Naive thymus-derived CD4-positive, alpha-beta T cell (primary cell): ENCODE measurements at regions of chr3 and their contacts with region 1.

Region 1: DNA sequence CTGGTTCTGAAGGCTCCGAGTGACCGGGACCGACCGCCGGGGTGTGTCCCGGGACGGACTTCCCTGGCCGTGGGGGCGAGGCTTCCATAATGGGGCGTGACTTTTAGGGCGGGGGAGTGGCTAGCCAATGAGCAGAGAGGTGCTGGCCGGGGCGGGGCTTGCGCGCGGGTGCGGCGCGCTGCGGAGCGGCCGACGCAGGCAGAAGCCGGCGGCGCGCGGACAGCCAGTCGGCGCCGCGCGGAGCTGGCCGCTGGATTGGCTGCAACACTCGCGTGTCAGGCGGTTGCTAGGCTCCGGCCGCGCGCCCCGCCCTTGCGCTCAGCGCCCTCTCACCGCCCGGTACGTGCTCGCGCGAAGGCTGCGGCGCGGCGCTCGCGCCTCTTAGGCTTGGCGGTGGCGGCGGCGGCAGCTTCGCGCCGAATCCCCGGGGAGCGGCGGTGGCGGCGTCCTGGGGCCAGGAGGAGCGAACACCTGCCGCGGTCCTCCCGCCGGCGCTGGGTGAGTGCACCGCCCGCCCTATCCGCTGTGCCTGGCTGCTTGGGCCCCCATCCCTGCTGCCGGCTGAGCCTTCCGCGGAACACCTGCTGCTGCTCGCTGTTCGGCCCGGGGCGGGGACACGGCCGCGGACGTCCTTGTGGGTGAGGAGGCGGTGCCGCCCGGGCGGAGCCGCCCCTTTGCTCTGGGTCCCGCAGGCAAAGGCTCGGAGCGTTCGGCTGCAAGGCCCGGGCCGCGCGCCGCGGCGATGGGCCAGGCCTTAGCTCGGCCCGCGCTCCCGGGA is at the start of gene DAG1:
- DNase-seq: peak; percentile 90 to 98 (median 95)
- ATAC-seq: peak; percentile 91
- H3K4me3 ChIP-seq: peak within 1 kb of the TSS; percentile 92
- H3K4me3 Mint-ChIP-seq: peak within 1 kb of the TSS; percentile 87 to 97 (median 92)
- H3K27ac ChIP-seq: peak within 1 kb of the TSS; percentile 94
- H3K27ac Mint-ChIP-seq: peak within 1 kb of the TSS; percentile 89 to 95 (median 93)
- H3K4me1 ChIP-seq: peaks cover 15 to 20% of the 10 kb centered on the region in 2 donors
- H3K4me1 Mint-ChIP-seq: peaks cover 14 to 27% (median 22%) of the 10 kb centered on the region in 7 donors
- H3K27me3 ChIP-seq: no peaks in the 10 kb centered on the region
- H3K27me3 Mint-ChIP-seq: no peaks in the 10 kb centered on the region
- total RNA-seq, gene DAG1: 12.0 to 22.3 (median 20.1) TPM

Region 2: GRCh38 chr3:48685602-48686511 is 784.3 kb before region 1 on chr3 and contains the start of gene NCKIPSD:
- CTCF ChIA-PET with region 1: no interaction called
- POLR2A ChIA-PET with region 1: no interaction called
- intact Hi-C with region 1: loop called in 1 of 2 experiments (anchors 10 kb)
- DNase-seq: peak; percentile 83 to 96 (median 92)
- ATAC-seq: peak; percentile 97
- H3K4me3 ChIP-seq: peak within 1 kb of the TSS; percentile 92
- H3K4me3 Mint-ChIP-seq: peak within 1 kb of the TSS; percentile 88 to 95 (median 93)
- H3K27ac ChIP-seq: peak within 1 kb of the TSS; percentile 79
- H3K27ac Mint-ChIP-seq: peak within 1 kb of the TSS; percentile 73 to 94 (median 89)
- H3K4me1 ChIP-seq: peaks cover 8 to 18% of the 10 kb centered on the region in 2 donors
- H3K4me1 Mint-ChIP-seq: peaks cover 29 to 38% (median 33%) of the 10 kb centered on the region in 7 donors
- H3K27me3 ChIP-seq: no peaks in the 10 kb centered on the region
- H3K27me3 Mint-ChIP-seq: no peaks in the 10 kb centered on the region
- total RNA-seq, gene NCKIPSD: 13.7 to 42.1 (median 20.3) TPM

Region 3: DNA sequence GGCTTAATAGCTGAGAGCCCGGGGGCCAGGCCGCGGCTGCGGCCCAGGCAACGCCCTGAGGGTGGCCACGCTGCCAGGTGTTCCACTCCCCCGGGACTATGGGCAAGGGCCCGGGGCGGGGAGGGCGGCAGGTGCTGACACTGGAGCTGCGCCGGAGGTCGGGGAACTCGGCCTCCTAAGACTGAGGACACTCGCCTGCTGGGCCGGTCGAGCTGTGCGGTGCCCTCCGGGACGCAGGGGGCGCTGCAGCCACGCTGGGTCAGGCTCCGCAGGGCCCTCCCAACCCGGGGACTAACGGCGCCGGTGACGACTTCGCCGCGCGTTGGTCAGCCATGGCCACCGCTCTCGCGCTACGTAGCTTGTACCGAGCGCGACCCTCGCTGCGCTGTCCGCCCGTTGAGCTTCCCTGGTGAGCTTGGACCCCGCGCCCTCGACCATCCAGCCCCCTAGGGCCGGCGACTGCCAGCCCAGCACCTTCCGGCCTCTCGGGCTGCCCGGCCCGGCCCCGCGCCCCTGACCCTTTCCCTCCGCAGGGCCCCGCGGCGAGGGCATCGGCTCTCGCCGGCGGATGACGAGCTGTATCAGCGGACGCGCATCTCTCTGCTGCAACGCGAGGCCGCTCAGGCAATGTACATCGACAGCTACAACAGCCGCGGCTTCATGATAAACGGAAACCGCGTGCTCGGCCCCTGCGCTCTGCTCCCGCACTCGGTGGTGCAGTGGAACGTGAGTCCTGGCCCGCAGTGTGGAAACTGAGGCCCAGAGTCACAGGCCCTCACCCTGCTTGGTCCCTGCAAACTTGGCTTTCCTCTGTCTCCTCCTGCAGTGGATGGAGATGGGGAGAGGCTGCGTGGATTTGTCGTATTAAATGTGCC is 448.1 kb before region 1 on chr3 and contains the start of gene NDUFAF3:
- CTCF ChIA-PET with region 1: interaction called, 3 read pairs
- POLR2A ChIA-PET with region 1: no interaction called
- intact Hi-C with region 1: loop called (anchors 1 to 2 kb)
- DNase-seq: peak; percentile 84 to 96 (median 89)
- ATAC-seq: peak; percentile 89
- H3K4me3 ChIP-seq: peak within 1 kb of the TSS; percentile 99
- H3K4me3 Mint-ChIP-seq: peak within 1 kb of the TSS; percentile 92 to 99 (median 97)
- H3K27ac ChIP-seq: peak within 1 kb of the TSS; percentile 98
- H3K27ac Mint-ChIP-seq: peak within 1 kb of the TSS; percentile 95 to 99 (median 98)
- H3K4me1 ChIP-seq: peaks cover 24 to 25% of the 10 kb centered on the region in 2 donors
- H3K4me1 Mint-ChIP-seq: peaks cover 21 to 61% (median 47%) of the 10 kb centered on the region in 7 donors
- H3K27me3 ChIP-seq: no peaks in the 10 kb centered on the region
- H3K27me3 Mint-ChIP-seq: peaks cover 0 to 2% (median 0%) of the 10 kb centered on the region in 5 donors
- total RNA-seq, gene NDUFAF3: 63.8 to 110 (median 89.3) TPM

Region 4: DNA sequence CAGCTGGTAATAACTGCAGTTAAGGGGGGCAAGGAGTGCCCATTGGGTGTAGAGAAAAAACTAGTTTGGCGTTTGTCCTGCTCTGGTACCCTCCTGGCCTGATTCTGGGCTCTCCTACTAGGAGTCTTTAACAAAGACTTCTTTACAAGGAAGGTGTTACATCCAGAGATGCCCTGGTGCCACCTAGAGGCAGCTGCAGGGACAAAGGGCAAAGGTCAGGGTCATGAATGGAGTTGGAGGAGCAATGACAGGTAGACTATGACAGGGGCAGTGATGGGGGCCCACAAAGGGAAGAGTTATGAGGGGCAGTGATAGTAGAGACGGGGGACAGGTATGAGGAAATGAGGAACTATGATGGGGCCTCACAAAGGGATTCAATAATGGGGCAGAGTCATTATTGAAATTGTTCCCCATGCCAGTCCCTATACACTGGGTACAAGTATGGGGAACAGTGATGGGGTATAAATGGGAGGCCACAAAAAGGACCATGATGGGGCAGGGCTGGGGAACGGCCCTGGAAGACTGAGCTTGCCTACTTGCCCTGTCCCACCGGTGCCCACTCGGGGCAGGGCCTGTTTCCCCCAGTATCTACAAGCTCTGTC is 311.9 kb before region 1 on chr3:
- CTCF ChIA-PET with region 1: no interaction called
- POLR2A ChIA-PET with region 1: no interaction called
- intact Hi-C with region 1: no loop called
- DNase-seq: peak in 8 of 9 donors; percentile 40 to 68 (median 59)
- ATAC-seq: peak; percentile 89
- H3K4me3 ChIP-seq: no peak overlapping the region
- H3K4me3 Mint-ChIP-seq: no peak overlapping the region
- H3K27ac ChIP-seq: peak overlapping the region; percentile 20
- H3K27ac Mint-ChIP-seq: peak overlapping the region in 6 of 9 donors; percentile 3 to 82 (median 18)
- H3K4me1 ChIP-seq: no peaks in the 10 kb centered on the region
- H3K4me1 Mint-ChIP-seq: peaks cover 0 to 10% (median 5%) of the 10 kb centered on the region in 7 donors
- H3K27me3 ChIP-seq: no peaks in the 10 kb centered on the region
- H3K27me3 Mint-ChIP-seq: no peaks in the 10 kb centered on the region

Region 5: DNA sequence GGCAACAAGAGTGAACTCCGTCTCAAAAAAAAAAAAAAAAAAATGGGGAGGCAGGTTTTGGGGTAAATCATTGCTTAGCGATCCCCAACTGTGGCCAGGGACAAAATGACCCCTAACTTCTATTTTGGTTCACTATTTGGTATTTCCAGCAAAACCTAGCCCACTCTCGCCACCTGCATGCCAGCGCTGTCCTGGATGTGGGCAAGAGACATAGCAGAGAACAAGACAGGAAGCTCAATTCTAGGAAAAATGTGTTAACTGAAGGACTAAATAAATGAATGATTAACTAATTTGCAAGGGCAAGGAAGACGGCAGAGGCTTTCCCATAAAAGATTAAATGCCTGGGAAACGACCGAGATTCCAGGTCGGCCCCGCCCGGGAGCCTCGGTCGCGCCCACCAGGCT is 41.4 kb before region 1 on chr3:
- CTCF ChIA-PET with region 1: no interaction called
- POLR2A ChIA-PET with region 1: no interaction called
- intact Hi-C with region 1: loop called (anchors 1 kb)
- DNase-seq: peak in 1 of 9 donors; percentile 13
- ATAC-seq: no peak
- H3K4me3 ChIP-seq: peak overlapping the region; percentile 84
- H3K4me3 Mint-ChIP-seq: peak overlapping the region; percentile 88 to 98 (median 94)
- H3K27ac ChIP-seq: peak overlapping the region; percentile 83
- H3K27ac Mint-ChIP-seq: peak overlapping the region; percentile 49 to 96 (median 94)
- H3K4me1 ChIP-seq: peaks cover 0 to 5% of the 10 kb centered on the region in 2 donors
- H3K4me1 Mint-ChIP-seq: peaks cover 17 to 37% (median 28%) of the 10 kb centered on the region in 7 donors
- H3K27me3 ChIP-seq: no peaks in the 10 kb centered on the region
- H3K27me3 Mint-ChIP-seq: no peaks in the 10 kb centered on the region

Region 6: GRCh38 chr3:49493901-49494300 is 23.8 kb after region 1 on chr3:
- CTCF ChIA-PET with region 1: no interaction called
- POLR2A ChIA-PET with region 1: no interaction called
- intact Hi-C with region 1: no loop called
- DNase-seq: no peak
- ATAC-seq: no peak
- H3K4me3 ChIP-seq: no peak overlapping the region
- H3K4me3 Mint-ChIP-seq: no peak overlapping the region
- H3K27ac ChIP-seq: no peak overlapping the region
- H3K27ac Mint-ChIP-seq: peak overlapping the region in 2 of 9 donors; percentile 69 to 76
- H3K4me1 ChIP-seq: no peaks in the 10 kb centered on the region
- H3K4me1 Mint-ChIP-seq: peaks cover 6 to 14% (median 11%) of the 10 kb centered on the region in 7 donors
- H3K27me3 ChIP-seq: no peaks in the 10 kb centered on the region
- H3K27me3 Mint-ChIP-seq: no peaks in the 10 kb centered on the region

Region 7: DNA sequence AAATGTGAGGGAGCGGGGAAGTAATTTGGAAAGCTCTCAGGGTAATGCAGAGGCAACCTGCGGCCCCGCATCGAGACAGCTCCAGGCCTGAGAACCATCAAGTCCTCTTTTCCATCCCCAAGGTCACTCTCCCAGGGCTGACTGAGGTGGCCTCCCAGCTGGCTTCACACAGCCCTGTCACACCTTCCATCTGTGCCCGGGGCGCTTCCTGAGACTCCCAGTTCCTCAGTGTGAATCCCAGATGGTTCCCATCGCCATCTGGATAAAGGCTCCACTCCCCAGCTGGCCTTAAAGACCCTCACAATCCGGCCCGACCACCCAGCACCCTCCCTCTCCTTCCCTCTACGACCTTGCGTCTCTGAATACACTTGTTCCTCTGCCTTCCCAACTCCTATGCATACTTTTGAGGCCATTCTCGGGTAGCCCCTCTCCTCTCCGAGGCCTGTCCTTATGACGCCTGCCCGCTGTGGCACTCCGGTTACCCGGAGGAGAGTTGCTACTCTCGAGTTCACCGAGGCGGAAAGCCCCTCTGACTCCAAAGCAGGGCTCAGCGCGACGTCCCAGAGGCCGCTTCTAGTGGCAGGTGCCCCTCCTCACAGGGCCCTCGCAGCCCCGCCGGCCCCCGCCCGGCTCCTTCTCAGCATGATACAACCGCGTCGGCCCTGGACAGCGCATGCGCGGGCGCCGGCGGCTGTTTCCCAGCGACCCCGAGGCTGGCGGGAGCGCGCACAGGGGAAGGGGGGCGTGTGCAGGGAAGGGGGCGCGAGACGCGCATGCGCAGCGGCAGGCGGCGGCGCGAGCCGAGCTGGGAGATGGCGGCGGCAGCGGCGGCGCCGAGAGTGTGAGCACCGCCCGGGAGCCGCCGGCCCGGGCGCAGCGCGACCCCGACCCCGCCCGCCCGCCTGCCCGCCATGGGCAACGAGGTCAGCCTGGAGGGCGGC is 83.8 kb after region 1 on chr3 and contains the start of gene BSN:
- CTCF ChIA-PET with region 1: no interaction called
- POLR2A ChIA-PET with region 1: interaction called, 3 read pairs
- intact Hi-C with region 1: loop called in 1 of 2 experiments (anchors 1 kb)
- DNase-seq: peak; percentile 81 to 92 (median 88)
- ATAC-seq: peak; percentile 91
- H3K4me3 ChIP-seq: peak within 1 kb of the TSS; percentile 75
- H3K4me3 Mint-ChIP-seq: peak within 1 kb of the TSS; percentile 80 to 92 (median 86)
- H3K27ac ChIP-seq: peak within 1 kb of the TSS; percentile 37
- H3K27ac Mint-ChIP-seq: peak within 1 kb of the TSS in 8 of 9 donors; percentile 20 to 92 (median 41)
- H3K4me1 ChIP-seq: peaks cover 0 to 20% of the 10 kb centered on the region in 2 donors
- H3K4me1 Mint-ChIP-seq: peaks cover 9 to 20% (median 13%) of the 10 kb centered on the region in 7 donors
- H3K27me3 ChIP-seq: no peaks in the 10 kb centered on the region
- H3K27me3 Mint-ChIP-seq: peaks cover 41 to 56% (median 46%) of the 10 kb centered on the region in 5 donors
- total RNA-seq, gene BSN: 0.12 to 0.16 (median 0.14) TPM